ENCODE measurements at regions of chr2 and their contacts with region 1.

Region 1: GRCh38 chr2:98676742-98677141 is 54.2 kb downstream of the MGAT4A start:
- DNase-seq: no peak
- ATAC-seq: no peak
- H3K4me3 ChIP-seq: no peak overlapping the region
- H3K4me3 Mint-ChIP-seq: peak overlapping the region in 4 of 10 donors; percentile 3 to 55 (median 14)
- H3K27ac ChIP-seq: no peak overlapping the region
- H3K27ac Mint-ChIP-seq: peak overlapping the region in 7 of 9 donors; percentile 44 to 88 (median 65)
- H3K4me1 ChIP-seq: peaks cover 0 to 5% of the 10 kb centered on the region in 2 donors
- H3K4me1 Mint-ChIP-seq: peaks cover 17 to 76% (median 55%) of the 10 kb centered on the region in 7 donors
- H3K27me3 ChIP-seq: no peaks in the 10 kb centered on the region
- H3K27me3 Mint-ChIP-seq: no peaks in the 10 kb centered on the region

Region 2: GRCh38 chr2:98634401-98635092 is 42.2 kb before region 1 on chr2:
- CTCF ChIA-PET with region 1: no interaction called
- POLR2A ChIA-PET with region 1: no interaction called
- intact Hi-C with region 1: no loop called
- DNase-seq: peak in 5 of 9 donors; percentile 26 to 64 (median 38)
- ATAC-seq: peak; percentile 63
- H3K4me3 ChIP-seq: no peak overlapping the region
- H3K4me3 Mint-ChIP-seq: peak overlapping the region in 9 of 10 donors; percentile 26 to 73 (median 68)
- H3K27ac ChIP-seq: peak overlapping the region; percentile 56
- H3K27ac Mint-ChIP-seq: peak overlapping the region; percentile 84 to 97 (median 93)
- H3K4me1 ChIP-seq: peaks cover 33 to 46% of the 10 kb centered on the region in 2 donors
- H3K4me1 Mint-ChIP-seq: peaks cover 22 to 53% (median 38%) of the 10 kb centered on the region in 7 donors
- H3K27me3 ChIP-seq: no peaks in the 10 kb centered on the region
- H3K27me3 Mint-ChIP-seq: no peaks in the 10 kb centered on the region

Region 3: GRCh38 chr2:98654699-98655495 is 21.8 kb before region 1 on chr2:
- CTCF ChIA-PET with region 1: interaction called, 5 read pairs
- POLR2A ChIA-PET with region 1: interaction called, 28 read pairs
- intact Hi-C with region 1: no loop called
- DNase-seq: peak in 7 of 9 donors; percentile 52 to 80 (median 75)
- ATAC-seq: peak; percentile 72
- H3K4me3 ChIP-seq: peak overlapping the region; percentile 4
- H3K4me3 Mint-ChIP-seq: peak overlapping the region; percentile 40 to 81 (median 69)
- H3K27ac ChIP-seq: peak overlapping the region; percentile 79
- H3K27ac Mint-ChIP-seq: peak overlapping the region; percentile 76 to 99 (median 93)
- H3K4me1 ChIP-seq: peaks cover 64 to 85% of the 10 kb centered on the region in 2 donors
- H3K4me1 Mint-ChIP-seq: peaks cover 50 to 97% (median 88%) of the 10 kb centered on the region in 7 donors
- H3K27me3 ChIP-seq: no peaks in the 10 kb centered on the region
- H3K27me3 Mint-ChIP-seq: no peaks in the 10 kb centered on the region

Region 4: GRCh38 chr2:98664327-98664726 is 12.4 kb before region 1 on chr2:
- CTCF ChIA-PET with region 1: interaction called, 3 read pairs
- POLR2A ChIA-PET with region 1: interaction called, 28 read pairs
- intact Hi-C with region 1: loop called in 1 of 2 experiments (anchors 1 kb)
- DNase-seq: peak in 8 of 9 donors; percentile 39 to 88 (median 80)
- ATAC-seq: peak; percentile 83
- H3K4me3 ChIP-seq: peak overlapping the region; percentile 14
- H3K4me3 Mint-ChIP-seq: peak overlapping the region; percentile 56 to 94 (median 80)
- H3K27ac ChIP-seq: peak overlapping the region; percentile 79
- H3K27ac Mint-ChIP-seq: peak overlapping the region; percentile 91 to 99 (median 97)
- H3K4me1 ChIP-seq: peaks cover 51 to 70% of the 10 kb centered on the region in 2 donors
- H3K4me1 Mint-ChIP-seq: peaks cover 35 to 93% (median 75%) of the 10 kb centered on the region in 7 donors
- H3K27me3 ChIP-seq: no peaks in the 10 kb centered on the region
- H3K27me3 Mint-ChIP-seq: no peaks in the 10 kb centered on the region

Region 5: DNA sequence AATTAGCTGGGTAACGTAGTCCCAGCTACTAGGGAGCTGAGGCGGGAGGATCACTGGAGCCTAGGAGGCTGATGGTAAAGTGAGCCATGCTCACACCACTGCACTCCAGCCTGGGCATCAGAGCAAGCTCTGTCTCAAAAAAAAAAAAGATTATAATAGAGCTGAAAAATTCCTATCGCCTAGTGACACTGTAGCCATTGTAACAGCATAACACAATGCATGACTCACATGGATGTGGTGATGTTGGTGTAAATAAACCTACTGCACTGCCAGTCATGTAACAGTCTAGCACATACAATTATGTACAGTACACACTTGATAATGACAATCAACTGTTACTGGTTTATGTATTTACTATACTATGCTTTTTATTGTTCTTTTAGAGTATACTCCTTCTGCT is 14.6 kb after region 1 on chr2:
- CTCF ChIA-PET with region 1: interaction called, 4 read pairs
- POLR2A ChIA-PET with region 1: interaction called, 4 read pairs
- intact Hi-C with region 1: loop called in 1 of 2 experiments (anchors 2 kb)
- DNase-seq: peak in 1 of 9 donors; percentile 14
- ATAC-seq: peak; percentile 52
- H3K4me3 ChIP-seq: no peak overlapping the region
- H3K4me3 Mint-ChIP-seq: peak overlapping the region in 8 of 10 donors; percentile 29 to 71 (median 54)
- H3K27ac ChIP-seq: peak overlapping the region; percentile 7
- H3K27ac Mint-ChIP-seq: peak overlapping the region; percentile 32 to 94 (median 79)
- H3K4me1 ChIP-seq: peaks cover 60 to 61% of the 10 kb centered on the region in 2 donors
- H3K4me1 Mint-ChIP-seq: peaks cover 56 to 97% (median 91%) of the 10 kb centered on the region in 7 donors
- H3K27me3 ChIP-seq: no peaks in the 10 kb centered on the region
- H3K27me3 Mint-ChIP-seq: no peaks in the 10 kb centered on the region

Region 6: DNA sequence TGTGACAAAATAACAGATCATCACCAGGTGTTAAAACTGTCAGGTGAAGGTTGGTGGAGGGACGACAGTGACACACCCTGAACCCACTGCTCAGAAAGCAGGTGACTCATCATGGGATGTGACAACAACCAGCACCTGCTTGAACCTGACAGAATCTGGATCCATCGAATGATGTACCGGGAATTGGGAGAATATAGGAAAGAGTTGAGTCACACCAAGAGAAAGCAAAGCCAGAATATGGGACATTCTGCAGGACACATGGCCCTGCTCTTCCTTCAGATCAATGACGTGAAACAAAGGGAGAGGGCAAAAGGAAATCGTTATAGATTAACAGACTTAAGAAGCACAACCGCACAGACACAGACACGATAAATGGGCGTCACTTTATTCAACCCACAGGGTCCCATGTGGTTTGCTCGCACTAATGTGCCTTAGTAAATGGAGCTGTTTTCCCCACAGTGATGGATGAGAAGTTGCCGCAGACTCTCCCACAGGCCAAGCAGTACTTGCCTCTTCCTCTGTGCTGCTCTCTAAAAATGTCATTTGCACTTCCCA is 159.2 kb after region 1 on chr2:
- CTCF ChIA-PET with region 1: no interaction called
- POLR2A ChIA-PET with region 1: no interaction called
- intact Hi-C with region 1: no loop called
- DNase-seq: peak in 7 of 9 donors; percentile 55 to 78 (median 72)
- ATAC-seq: peak; percentile 87
- H3K4me3 ChIP-seq: peak overlapping the region; percentile 1
- H3K4me3 Mint-ChIP-seq: peak overlapping the region; percentile 32 to 79 (median 52)
- H3K27ac ChIP-seq: peak overlapping the region; percentile 66
- H3K27ac Mint-ChIP-seq: peak overlapping the region; percentile 78 to 98 (median 88)
- H3K4me1 ChIP-seq: peaks cover 16 to 43% of the 10 kb centered on the region in 2 donors
- H3K4me1 Mint-ChIP-seq: peaks cover 24 to 51% (median 28%) of the 10 kb centered on the region in 7 donors
- H3K27me3 ChIP-seq: no peaks in the 10 kb centered on the region
- H3K27me3 Mint-ChIP-seq: peaks cover 0 to 17% (median 0%) of the 10 kb centered on the region in 5 donors

Measured in naive thymus-derived CD4-positive, alpha-beta T cell (primary cell).